ENCODE measurements at regions of chr1 and their contacts with region 1.

Region 1: GRCh38 chr1:155208541-155209311 is at the start of gene MTX1:
- DNase-seq: peak; percentile 81 to 97 (median 92)
- ATAC-seq: peak; percentile 76 to 86
- H3K4me3 Mint-ChIP-seq: peak within 1 kb of the TSS; percentile 83 to 95 (median 88)
- H3K27ac Mint-ChIP-seq: peak within 1 kb of the TSS; percentile 90 to 99 (median 98)
- H3K4me1 Mint-ChIP-seq: peaks cover 22 to 33% (median 30%) of the 10 kb centered on the region in 4 donors
- H3K27me3 Mint-ChIP-seq: no peaks in the 10 kb centered on the region
- polyA plus RNA-seq, gene MTX1: 45.8 to 50.7 (median 48.5) TPM

Region 2: GRCh38 chr1:155172732-155173477 is 35.8 kb before region 1 on chr1 and contains the start of gene KRTCAP2:
- POLR2A ChIA-PET with region 1: interaction called, 42 read pairs
- DNase-seq: peak; percentile 89 to 97 (median 92)
- ATAC-seq: peak; percentile 80 to 83
- H3K4me3 Mint-ChIP-seq: peak within 1 kb of the TSS; percentile 97 to 100 (median 99)
- H3K27ac Mint-ChIP-seq: peak within 1 kb of the TSS; percentile 98 to 100 (median 99)
- H3K4me1 Mint-ChIP-seq: peaks cover 26 to 54% (median 51%) of the 10 kb centered on the region in 4 donors
- H3K27me3 Mint-ChIP-seq: peaks cover 0 to 2% (median 0%) of the 10 kb centered on the region in 5 donors
- polyA plus RNA-seq, gene KRTCAP2: 453 to 495 (median 490) TPM

Region 3: GRCh38 chr1:155193275-155193990 is 15.3 kb before region 1 on chr1:
- POLR2A ChIA-PET with region 1: interaction called, 65 read pairs
- DNase-seq: peak; percentile 40 to 79 (median 60)
- ATAC-seq: peak; percentile 6 to 17
- H3K4me3 Mint-ChIP-seq: peak overlapping the region; percentile 77 to 97 (median 90)
- H3K27ac Mint-ChIP-seq: peak overlapping the region; percentile 93 to 100 (median 98)
- H3K4me1 Mint-ChIP-seq: peaks cover 18 to 33% (median 26%) of the 10 kb centered on the region in 4 donors
- H3K27me3 Mint-ChIP-seq: peaks cover 0 to 2% (median 0%) of the 10 kb centered on the region in 5 donors

Region 4: DNA sequence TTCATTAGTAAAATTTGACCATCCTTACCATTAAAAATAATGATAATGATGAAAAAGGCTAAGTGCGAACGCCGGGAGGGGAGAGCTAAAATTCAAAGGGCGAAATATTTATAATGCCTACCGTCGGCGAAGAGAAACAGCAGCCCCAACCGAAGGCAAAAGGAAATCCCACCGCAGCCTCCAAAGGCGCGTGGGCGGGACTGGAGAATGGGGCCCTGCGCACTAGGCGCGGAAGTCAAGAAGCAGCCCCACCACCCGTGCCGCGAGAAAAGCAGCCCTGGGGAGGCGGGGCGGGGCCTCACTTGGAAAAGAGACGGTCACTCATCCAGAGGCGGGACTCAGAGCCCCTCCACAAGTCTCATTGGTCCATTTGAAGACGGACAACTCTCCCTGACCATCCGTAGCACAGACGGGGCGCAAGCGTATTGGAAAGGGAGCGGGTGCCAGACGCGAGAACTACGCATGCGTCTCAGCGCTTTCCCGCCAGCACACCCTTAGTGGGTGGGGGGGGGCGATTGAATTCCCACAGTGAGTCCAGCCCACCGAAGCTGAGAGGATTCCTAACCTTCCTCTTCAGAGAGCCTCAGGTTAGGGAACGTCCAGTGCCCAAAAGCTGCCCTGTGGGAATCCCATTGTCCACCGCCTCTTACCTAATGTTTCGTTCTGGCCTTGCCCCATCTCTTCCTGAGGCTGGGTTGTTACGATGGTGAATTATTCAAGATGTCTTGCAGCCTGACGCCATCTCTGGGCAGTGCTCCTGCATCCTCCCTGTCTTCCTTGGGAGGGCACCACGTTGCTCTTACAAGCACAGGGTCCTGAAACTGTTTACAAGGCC is 18.8 kb after region 1 on chr1:
- POLR2A ChIA-PET with region 1: interaction called, 42 read pairs
- DNase-seq: peak; percentile 91 to 99 (median 98)
- ATAC-seq: peak; percentile 91 to 92
- H3K4me3 Mint-ChIP-seq: peak overlapping the region; percentile 74 to 93 (median 87)
- H3K27ac Mint-ChIP-seq: peak overlapping the region; percentile 84 to 98 (median 94)
- H3K4me1 Mint-ChIP-seq: peaks cover 6 to 46% (median 24%) of the 10 kb centered on the region in 4 donors
- H3K27me3 Mint-ChIP-seq: no peaks in the 10 kb centered on the region

Measured in naive thymus-derived CD8-positive, alpha-beta T cell (primary cell).